HEK293 (cell line): ENCODE measurements at regions of chr1 and their contacts with region 1.

Region 1: DNA sequence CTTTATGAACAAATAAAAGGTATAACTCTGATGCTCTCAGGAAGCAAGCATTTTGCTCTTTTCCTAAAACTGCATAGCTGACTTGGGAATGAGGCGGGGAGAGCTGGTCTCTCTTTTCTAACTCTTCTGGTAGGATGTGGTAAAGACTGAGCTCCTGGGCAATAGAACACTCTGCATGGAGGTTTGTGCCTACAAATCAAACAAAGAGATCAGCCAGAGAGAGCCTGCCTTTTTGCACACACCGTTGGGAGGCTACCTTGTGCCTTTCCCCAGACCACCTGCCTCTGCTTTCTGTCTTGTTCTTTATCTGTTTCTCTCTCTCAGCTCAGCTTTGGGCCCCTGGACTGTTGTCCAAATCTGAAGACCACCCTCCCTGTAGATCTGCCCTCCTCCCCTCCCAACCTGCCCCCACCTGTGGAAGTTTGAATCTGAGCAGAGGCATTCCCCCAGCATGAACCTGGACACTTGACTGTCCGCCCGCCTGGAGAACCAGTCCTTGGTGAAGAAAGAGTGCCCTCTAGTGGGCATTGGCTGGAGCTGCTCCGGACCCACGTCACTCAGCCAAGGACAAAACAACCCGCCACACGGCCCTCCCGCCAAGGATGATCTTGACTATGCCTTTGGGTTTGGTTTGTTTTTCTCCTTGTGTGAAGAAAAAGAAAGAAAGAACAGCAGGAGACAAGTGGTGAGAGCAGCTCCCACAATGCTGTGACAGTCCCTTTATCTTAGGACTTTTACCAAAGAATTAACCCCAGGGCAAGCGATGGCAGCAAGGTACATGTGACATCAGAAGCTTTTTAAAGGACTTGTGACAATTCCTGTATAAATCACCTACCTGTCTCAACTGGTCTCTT is 228.2 kb downstream of the PBX1 start:
- H3K4me3 ChIP-seq: no peak overlapping the region; the same call in 1 of the 2 replicates
- H3K27ac ChIP-seq: peak overlapping the region; percentile 14; the same call in 1 of the 2 replicates
- H3K4me1 ChIP-seq: peaks cover 9% of the 10 kb centered on the region
- CTCF ChIP-seq: peak; percentile 95

Region 2: GRCh38 chr1:164602480-164603093 is 184.6 kb before region 1 on chr1:
- CTCF ChIA-PET with region 1: interaction called, 15 read pairs
- POLR2A ChIA-PET with region 1: no interaction called
- H3K4me3 ChIP-seq: no peak overlapping the region
- H3K27ac ChIP-seq: peak overlapping the region; percentile 66
- H3K4me1 ChIP-seq: peaks cover 37% of the 10 kb centered on the region
- CTCF ChIP-seq: peak; percentile 59; the same call in 1 of the 2 replicates

Region 3: GRCh38 chr1:164617377-164618201 is 169.6 kb before region 1 on chr1:
- CTCF ChIA-PET with region 1: interaction called, 13 read pairs
- POLR2A ChIA-PET with region 1: interaction called, 4 read pairs
- H3K4me3 ChIP-seq: no peak overlapping the region
- H3K27ac ChIP-seq: no peak overlapping the region
- H3K4me1 ChIP-seq: peaks cover 22% of the 10 kb centered on the region
- CTCF ChIP-seq: peak; percentile 65; the same call in 1 of the 2 replicates

Region 4: DNA sequence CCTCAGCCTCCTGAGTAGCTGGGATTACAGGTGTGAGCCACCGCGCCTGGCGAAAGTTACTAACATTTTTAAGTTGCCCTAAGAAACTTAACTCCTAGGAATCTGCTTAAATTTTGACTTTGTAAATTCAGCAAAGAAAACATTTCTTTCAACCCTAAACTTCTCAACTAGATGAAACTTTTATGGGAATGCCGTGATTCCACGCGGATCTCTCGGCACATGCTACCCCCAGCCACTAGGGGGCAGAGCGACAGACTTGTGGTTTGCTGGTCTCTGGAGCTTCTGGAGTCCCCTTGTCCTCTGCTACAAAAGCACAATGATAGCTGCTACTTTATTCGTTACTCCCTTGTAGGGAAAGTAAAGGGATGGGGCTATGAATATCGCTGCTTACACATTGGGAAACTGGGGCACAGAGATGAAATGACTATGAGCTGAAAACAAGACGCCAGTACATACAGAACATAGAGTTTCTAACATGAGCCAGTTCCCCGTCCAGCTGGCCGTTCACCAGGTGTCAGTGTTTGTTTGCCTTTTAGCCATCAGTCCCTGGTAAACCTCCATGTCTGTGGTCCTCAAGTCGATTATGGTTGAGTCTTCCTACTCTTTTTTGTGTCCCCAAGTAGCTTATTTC is 113.5 kb before region 1 on chr1:
- CTCF ChIA-PET with region 1: interaction called, 11 read pairs
- POLR2A ChIA-PET with region 1: no interaction called
- H3K4me3 ChIP-seq: no peak overlapping the region
- H3K27ac ChIP-seq: no peak overlapping the region
- H3K4me1 ChIP-seq: no peaks in the 10 kb centered on the region; the same call in 1 of the 2 replicates
- CTCF ChIP-seq: no peak

Region 5: GRCh38 chr1:164704954-164705353 is 82.3 kb before region 1 on chr1:
- CTCF ChIA-PET with region 1: interaction called, 12 read pairs
- POLR2A ChIA-PET with region 1: no interaction called
- H3K4me3 ChIP-seq: no peak overlapping the region
- H3K27ac ChIP-seq: no peak overlapping the region
- H3K4me1 ChIP-seq: peaks cover 6% of the 10 kb centered on the region; the same call in 1 of the 2 replicates
- CTCF ChIP-seq: no peak

Region 6: GRCh38 chr1:164743976-164744375 is 43.2 kb before region 1 on chr1:
- CTCF ChIA-PET with region 1: no interaction called
- POLR2A ChIA-PET with region 1: no interaction called
- H3K4me3 ChIP-seq: no peak overlapping the region
- H3K27ac ChIP-seq: no peak overlapping the region
- H3K4me1 ChIP-seq: no peaks in the 10 kb centered on the region
- CTCF ChIP-seq: no peak

Region 7: DNA sequence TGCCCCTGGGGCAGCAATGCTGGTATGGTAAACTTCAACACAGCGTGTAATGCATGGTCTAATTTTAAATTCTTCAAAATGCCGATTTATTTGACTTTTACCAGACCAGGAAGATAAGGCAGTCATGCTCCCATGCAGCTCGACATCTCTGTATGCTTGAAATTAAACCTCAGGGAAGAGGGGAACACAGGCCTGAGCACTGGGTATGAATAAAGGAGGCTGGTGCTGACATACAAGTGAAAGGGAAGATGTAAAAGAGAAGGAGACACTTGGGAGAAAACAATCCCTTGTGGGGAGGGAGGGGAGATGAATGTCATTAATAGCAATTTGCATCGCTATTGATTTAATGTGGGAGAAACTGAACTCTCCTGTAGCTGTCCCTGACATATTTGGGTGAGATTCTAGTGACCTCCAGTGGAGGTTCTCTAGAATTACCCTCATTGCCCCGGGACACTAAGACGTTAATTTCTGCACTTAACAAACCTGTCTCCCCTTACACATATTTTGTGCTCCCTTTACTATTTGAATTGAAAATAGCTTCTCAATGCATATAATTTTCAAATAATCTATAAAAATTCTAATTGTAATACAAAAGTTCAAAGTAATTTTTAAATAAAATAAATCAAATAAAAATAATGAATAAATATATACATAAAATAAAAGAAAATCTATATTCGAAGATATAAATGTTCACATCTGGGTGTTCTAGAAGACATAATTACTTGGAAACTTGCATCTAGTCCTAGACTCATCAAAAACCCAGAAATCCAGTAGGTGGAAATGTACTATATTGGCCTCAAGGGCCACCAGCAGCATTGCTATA is 286.2 kb after region 1 on chr1:
- CTCF ChIA-PET with region 1: interaction called, 12 read pairs
- POLR2A ChIA-PET with region 1: no interaction called
- H3K4me3 ChIP-seq: no peak overlapping the region
- H3K27ac ChIP-seq: no peak overlapping the region
- H3K4me1 ChIP-seq: no peaks in the 10 kb centered on the region
- CTCF ChIP-seq: peak; percentile 68